Naive thymus-derived CD4-positive, alpha-beta T cell (primary cell): ENCODE measurements at regions of chr1 and their contacts with region 1.

Region 1: DNA sequence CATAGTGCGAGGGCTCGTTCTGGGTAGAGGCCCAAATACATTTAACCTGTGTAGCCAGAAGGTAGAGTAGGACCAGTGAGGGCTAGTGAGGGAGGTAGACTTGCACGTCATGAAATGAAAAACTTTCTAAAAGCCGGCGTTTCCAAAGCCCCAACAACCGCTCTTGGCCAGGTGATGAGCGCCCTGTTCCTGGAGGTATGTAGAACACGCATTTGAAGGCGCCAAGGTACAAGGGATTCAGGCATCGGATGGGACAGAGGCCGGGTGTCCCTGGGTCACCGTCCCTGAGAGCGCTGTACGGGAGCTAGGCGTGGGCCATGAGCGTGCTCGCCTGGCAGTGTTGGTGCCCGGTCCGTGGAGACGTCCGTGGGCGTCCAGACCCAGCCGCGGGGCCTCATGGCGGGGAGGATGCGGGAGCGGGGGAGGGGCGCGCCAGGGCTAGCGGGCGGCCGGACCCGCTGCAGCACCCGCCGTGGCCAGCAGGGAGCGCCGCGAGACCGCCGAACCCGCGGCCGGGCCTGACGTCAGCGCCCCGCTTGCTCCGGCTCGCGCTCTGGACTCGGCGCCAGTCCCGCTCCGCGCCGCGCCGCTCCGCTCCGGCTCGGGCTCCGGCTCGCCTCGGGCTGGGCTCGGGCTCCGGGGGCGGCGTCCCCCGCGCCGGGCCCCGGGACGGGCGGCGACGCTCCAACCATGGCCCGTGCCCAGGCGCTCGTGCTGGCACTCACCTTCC is at the start of gene PTPRU:
- DNase-seq: peak; percentile 50 to 96 (median 78)
- ATAC-seq: peak; percentile 96
- H3K4me3 ChIP-seq: peak within 1 kb of the TSS; percentile 14
- H3K4me3 Mint-ChIP-seq: peak within 1 kb of the TSS; percentile 79 to 97 (median 86)
- H3K27ac ChIP-seq: no peak within 1 kb of the TSS
- H3K27ac Mint-ChIP-seq: peak within 1 kb of the TSS in 6 of 9 donors; percentile 0 to 80 (median 25)
- H3K4me1 ChIP-seq: peaks cover 7 to 17% of the 10 kb centered on the region in 2 donors
- H3K4me1 Mint-ChIP-seq: peaks cover 19 to 29% (median 28%) of the 10 kb centered on the region in 7 donors
- H3K27me3 ChIP-seq: peaks cover 12 to 14% of the 10 kb centered on the region in 2 donors
- H3K27me3 Mint-ChIP-seq: peaks cover 34 to 66% (median 50%) of the 10 kb centered on the region in 5 donors
- total RNA-seq, gene PTPRU: 0.17 to 0.42 TPM in 2 of 5 experiments, not detected in the others

Region 2: DNA sequence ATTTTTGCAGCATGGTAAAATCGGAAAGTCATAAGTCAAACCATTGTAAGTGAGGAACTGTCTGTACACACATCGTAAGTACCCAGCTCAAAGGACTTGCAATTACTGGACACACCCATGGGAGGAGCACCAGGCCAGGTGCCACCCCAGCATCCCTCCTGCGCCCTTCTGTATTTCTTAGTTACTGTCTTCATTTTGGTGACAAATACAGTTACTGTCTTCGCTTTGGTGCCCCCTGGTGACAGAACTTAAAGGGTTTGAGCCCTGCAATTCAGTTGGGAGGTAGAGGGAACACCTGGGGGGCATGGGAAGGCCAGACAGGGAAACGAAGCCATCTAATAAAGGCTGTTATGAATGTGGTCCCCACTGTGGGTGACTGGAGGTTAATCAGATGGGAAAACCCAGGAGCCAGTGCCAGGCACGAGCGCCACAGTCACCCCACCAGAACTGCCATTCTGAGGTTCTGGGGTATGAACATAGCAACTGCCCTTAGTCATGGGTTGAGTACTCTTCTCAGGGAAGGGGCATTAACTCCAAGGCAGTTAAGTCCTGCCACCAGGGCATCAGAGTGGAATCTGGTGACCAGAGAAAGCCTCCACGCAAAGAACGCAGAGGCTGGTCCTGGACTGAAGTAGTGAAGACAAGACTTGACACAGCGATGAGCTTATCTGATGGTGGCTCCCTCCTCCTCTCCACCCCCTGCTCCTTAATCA is 613.1 kb after region 1 on chr1:
- CTCF ChIA-PET with region 1: no interaction called
- POLR2A ChIA-PET with region 1: no interaction called
- intact Hi-C with region 1: loop called in 1 of 2 experiments (anchors 1 kb)
- DNase-seq: peak in 4 of 9 donors; percentile 9 to 45 (median 13)
- ATAC-seq: peak; percentile 52
- H3K4me3 ChIP-seq: no peak overlapping the region
- H3K4me3 Mint-ChIP-seq: no peak overlapping the region
- H3K27ac ChIP-seq: no peak overlapping the region
- H3K27ac Mint-ChIP-seq: no peak overlapping the region
- H3K4me1 ChIP-seq: no peaks in the 10 kb centered on the region
- H3K4me1 Mint-ChIP-seq: peaks cover 0 to 3% (median 0%) of the 10 kb centered on the region in 7 donors
- H3K27me3 ChIP-seq: no peaks in the 10 kb centered on the region
- H3K27me3 Mint-ChIP-seq: peaks cover 3 to 32% (median 26%) of the 10 kb centered on the region in 5 donors

Region 3: GRCh38 chr1:30379684-30380624 is 1143.8 kb after region 1 on chr1:
- CTCF ChIA-PET with region 1: interaction called, 9 read pairs
- POLR2A ChIA-PET with region 1: interaction called, 4 read pairs
- intact Hi-C with region 1: loop called in 1 of 2 experiments (anchors 1 kb)
- DNase-seq: peak in 8 of 9 donors; percentile 28 to 66 (median 52)
- ATAC-seq: peak; percentile 71
- H3K4me3 ChIP-seq: no peak overlapping the region
- H3K4me3 Mint-ChIP-seq: peak overlapping the region in 1 of 10 donors; percentile 23
- H3K27ac ChIP-seq: no peak overlapping the region
- H3K27ac Mint-ChIP-seq: no peak overlapping the region
- H3K4me1 ChIP-seq: no peaks in the 10 kb centered on the region
- H3K4me1 Mint-ChIP-seq: peaks cover 0 to 9% (median 4%) of the 10 kb centered on the region in 7 donors
- H3K27me3 ChIP-seq: no peaks in the 10 kb centered on the region
- H3K27me3 Mint-ChIP-seq: peaks cover 0 to 23% (median 12%) of the 10 kb centered on the region in 5 donors

Region 4: DNA sequence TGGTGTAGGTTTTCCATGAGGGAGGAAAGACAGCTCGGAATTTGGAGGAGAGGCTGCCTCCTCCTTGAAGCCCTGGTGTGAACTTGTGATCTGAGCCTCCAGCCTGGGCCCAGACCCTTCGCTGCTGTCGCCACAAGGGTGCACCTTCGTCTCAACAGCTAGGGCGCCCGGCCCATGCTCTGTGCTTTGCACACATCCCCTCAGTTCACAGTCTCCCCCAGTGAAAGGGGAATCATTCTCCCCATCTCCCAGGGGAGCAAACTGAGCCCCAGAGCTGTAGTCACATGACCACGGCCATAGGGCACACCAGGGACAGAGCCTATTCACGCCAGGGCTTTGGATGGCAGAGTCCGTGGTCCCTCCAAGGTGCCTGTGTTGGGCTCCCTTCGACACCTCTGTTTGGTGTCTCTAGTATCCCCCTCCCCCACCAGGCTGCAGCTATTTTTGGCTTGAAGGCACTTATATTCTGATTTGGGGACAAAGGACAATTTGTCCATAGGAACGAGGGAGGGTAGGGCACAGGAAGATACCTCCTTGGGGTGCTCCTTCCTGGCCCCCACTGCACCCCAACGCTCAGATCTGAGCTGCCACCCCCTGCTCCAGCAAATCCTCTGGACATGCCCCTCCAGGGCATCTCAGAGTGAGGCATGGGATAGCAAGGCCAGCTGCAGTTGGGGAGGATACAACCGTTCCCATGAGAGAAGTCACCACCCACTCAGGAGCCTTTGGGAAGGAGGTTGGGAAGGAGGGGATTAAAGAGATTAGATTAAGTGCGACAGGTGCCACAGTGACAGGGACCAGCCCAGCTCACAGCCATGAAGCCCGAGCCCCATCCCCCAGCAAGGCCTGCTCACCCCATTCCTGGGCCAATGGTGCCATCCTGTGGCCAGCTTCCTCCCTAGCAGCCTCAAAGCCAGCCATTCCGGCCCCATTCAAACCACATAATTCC is 1471.6 kb after region 1 on chr1:
- CTCF ChIA-PET with region 1: no interaction called
- POLR2A ChIA-PET with region 1: no interaction called
- intact Hi-C with region 1: loop called (anchors 1 kb)
- DNase-seq: peak in 7 of 9 donors; percentile 45 to 68 (median 54)
- ATAC-seq: peak; percentile 82
- H3K4me3 ChIP-seq: no peak overlapping the region
- H3K4me3 Mint-ChIP-seq: no peak overlapping the region
- H3K27ac ChIP-seq: no peak overlapping the region
- H3K27ac Mint-ChIP-seq: peak overlapping the region in 1 of 9 donors; percentile 55
- H3K4me1 ChIP-seq: no peaks in the 10 kb centered on the region
- H3K4me1 Mint-ChIP-seq: peaks cover 0 to 3% (median 0%) of the 10 kb centered on the region in 7 donors
- H3K27me3 ChIP-seq: no peaks in the 10 kb centered on the region
- H3K27me3 Mint-ChIP-seq: peaks cover 0 to 28% (median 6%) of the 10 kb centered on the region in 5 donors

Region 5: DNA sequence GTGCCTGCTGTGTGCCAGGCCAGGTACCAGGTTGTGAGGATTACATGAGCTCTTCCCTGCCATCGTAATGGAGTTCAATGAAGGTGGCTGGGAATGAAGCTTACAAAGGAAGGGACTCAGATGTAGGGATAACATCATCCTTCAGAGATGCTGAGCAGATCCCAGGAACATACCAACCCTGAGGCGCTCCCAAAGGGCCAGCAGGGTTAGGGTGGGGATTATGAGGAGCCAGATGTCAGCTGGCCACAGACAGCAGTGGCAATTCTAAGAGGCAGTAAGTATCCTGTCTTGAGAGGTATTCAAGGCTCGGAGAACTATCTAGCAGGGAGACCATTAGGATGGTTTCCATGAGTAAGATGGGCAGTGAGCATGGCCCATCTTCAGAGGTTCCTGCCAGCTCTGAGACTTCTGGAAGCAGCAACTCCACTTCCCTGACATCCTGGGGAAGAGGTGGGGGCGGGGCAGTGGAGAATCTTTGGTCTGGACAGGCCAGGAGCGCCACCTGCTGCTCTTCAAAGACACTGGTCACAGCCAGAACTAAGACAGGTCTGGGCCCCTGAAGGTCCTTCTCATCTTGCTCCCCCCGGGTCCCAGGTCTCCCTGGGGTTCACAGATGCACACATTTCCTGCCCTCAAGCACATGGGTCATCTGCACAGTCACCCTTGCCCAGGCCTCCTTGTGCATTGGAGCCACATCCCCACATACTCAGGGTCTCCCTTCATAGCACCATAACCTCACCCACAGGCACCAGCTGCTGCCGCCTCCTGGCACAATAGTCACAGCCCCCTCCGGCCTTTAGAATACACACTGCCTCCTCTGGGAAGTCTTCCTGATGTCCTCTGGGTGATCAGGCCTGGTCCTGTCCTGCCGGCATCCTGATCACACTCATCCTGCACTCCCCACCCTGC is 1675.2 kb after region 1 on chr1:
- CTCF ChIA-PET with region 1: no interaction called
- POLR2A ChIA-PET with region 1: no interaction called
- intact Hi-C with region 1: loop called in 1 of 2 experiments (anchors 5 kb)
- DNase-seq: peak in 2 of 9 donors; percentile 12 to 54
- ATAC-seq: peak; percentile 60
- H3K4me3 ChIP-seq: no peak overlapping the region
- H3K4me3 Mint-ChIP-seq: no peak overlapping the region
- H3K27ac ChIP-seq: no peak overlapping the region
- H3K27ac Mint-ChIP-seq: peak overlapping the region in 1 of 9 donors; percentile 66
- H3K4me1 ChIP-seq: peaks cover 0 to 6% of the 10 kb centered on the region in 2 donors
- H3K4me1 Mint-ChIP-seq: peaks cover 9 to 18% (median 15%) of the 10 kb centered on the region in 7 donors
- H3K27me3 ChIP-seq: peaks cover 0 to 4% of the 10 kb centered on the region in 2 donors
- H3K27me3 Mint-ChIP-seq: peaks cover 17 to 38% (median 19%) of the 10 kb centered on the region in 5 donors